Motor neuron (in vitro differentiated cells): ENCODE measurements at regions of chr7 and their contacts with region 1.

Region 1: DNA sequence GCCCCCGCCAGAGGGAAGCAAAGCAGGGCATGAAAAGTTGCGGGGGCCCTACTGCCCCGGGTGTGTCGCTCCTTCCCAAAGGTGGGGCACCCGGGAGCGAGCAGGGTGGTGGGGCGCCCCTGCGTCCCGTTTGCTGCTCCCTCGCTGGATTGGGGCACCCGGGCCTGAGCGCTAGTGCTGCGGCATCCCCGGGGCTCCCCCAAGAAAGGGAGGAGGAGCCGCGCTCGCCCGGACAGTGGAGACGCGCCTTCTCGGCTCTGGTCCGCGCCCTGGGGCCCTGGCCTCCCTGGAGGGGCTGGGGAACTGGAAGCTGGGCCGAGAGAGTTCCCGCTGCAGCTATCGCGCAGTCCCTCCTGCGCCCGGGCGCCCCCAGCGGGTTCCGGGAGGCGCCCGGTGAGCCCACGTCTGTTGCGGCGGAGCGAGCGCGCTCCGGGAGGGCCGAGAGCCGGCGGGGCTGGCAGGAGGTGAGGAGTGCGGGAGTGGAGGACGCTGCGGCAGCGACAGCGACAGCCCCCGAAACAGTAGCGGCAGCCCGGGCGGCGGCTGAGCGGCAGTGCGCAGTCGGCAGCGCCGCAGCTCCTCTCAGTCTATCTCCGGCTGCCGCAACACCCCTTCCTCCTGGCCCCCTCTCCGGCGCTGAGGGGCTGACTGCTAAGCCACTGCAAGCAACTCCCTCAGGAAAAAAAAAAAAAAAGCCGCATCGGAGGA is 504 bp upstream of the BMPER start:
- ATAC-seq: peak; percentile 78 to 86 (median 83)
- H3K4me3 ChIP-seq: peak overlapping the region; percentile 60 to 89 (median 73)
- H3K27ac ChIP-seq: peak overlapping the region in 1 of 2 donors; percentile 29
- H3K4me1 ChIP-seq: peaks cover 0 to 2% of the 10 kb centered on the region in 2 donors

Region 2: GRCh38 chr7:33459340-33459751 is 445.5 kb before region 1 on chr7:
- in situ Hi-C with region 1: loop called in 1 of 9 experiments (anchors 25 kb)
- ATAC-seq: peak in 7 of 8 experiments; percentile 43 to 93 (median 71)
- H3K4me3 ChIP-seq: no peak overlapping the region
- H3K27ac ChIP-seq: no peak overlapping the region
- H3K4me1 ChIP-seq: peaks cover 0 to 9% of the 10 kb centered on the region in 2 donors

Region 3: GRCh38 chr7:33757562-33758165 is 147.2 kb before region 1 on chr7:
- in situ Hi-C with region 1: loop called in 1 of 9 experiments (anchors 25 kb)
- ATAC-seq: peak in 1 of 8 experiments; percentile 26
- H3K4me3 ChIP-seq: no peak overlapping the region
- H3K27ac ChIP-seq: no peak overlapping the region
- H3K4me1 ChIP-seq: peaks cover 17 to 24% of the 10 kb centered on the region in 2 donors

Region 4: DNA sequence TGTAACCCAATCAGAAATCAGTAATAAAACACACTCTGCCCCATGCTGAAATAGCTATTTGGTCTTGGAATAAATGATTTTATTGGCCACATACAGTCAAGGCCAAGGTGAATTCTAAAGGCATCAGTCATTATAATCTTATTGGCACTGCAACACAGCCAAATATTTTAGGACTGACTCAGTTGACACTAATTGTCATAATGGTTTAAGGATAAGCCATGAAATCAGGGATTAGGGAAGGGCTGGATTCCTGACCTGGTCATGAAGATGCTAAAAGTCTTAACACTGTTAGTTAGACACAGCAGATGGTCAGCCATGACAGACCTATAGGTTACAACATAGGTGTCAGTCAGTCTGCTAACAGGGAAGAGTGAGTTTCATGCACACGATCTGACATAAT is 422.8 kb after region 1 on chr7:
- in situ Hi-C with region 1: no loop called
- ATAC-seq: no peak
- H3K4me3 ChIP-seq: no peak overlapping the region
- H3K27ac ChIP-seq: no peak overlapping the region
- H3K4me1 ChIP-seq: no peaks in the 10 kb centered on the region